ENCODE measurements at regions of chr12 and their contacts with region 1.

Region 1: GRCh38 chr12:6278439-6279255 is 31.8 kb upstream of the PLEKHG6 start:
- DNase-seq: peak; percentile 85
- ATAC-seq: peak; percentile 98
- H3K4me3 Mint-ChIP-seq: peak overlapping the region; percentile 61
- H3K27ac Mint-ChIP-seq: peak overlapping the region; percentile 21
- H3K4me1 Mint-ChIP-seq: peaks cover 3% of the 10 kb centered on the region
- H3K27me3 Mint-ChIP-seq: peaks cover 52% of the 10 kb centered on the region

Region 2: GRCh38 chr12:6062757-6063735 is 215.6 kb before region 1 on chr12:
- CTCF ChIA-PET with region 1: interaction called, 17 read pairs
- DNase-seq: peak; percentile 61
- ATAC-seq: peak; percentile 72
- H3K4me3 Mint-ChIP-seq: no peak overlapping the region
- H3K27ac Mint-ChIP-seq: no peak overlapping the region
- H3K4me1 Mint-ChIP-seq: no peaks in the 10 kb centered on the region
- H3K27me3 Mint-ChIP-seq: peaks cover 14% of the 10 kb centered on the region

Region 3: GRCh38 chr12:6230321-6231110 is 48.1 kb before region 1 on chr12:
- CTCF ChIA-PET with region 1: interaction called, 17 read pairs
- DNase-seq: peak; percentile 93
- ATAC-seq: peak; percentile 95
- H3K4me3 Mint-ChIP-seq: peak overlapping the region; percentile 19
- H3K27ac Mint-ChIP-seq: peak overlapping the region; percentile 81
- H3K4me1 Mint-ChIP-seq: peaks cover 29% of the 10 kb centered on the region
- H3K27me3 Mint-ChIP-seq: peaks cover 7% of the 10 kb centered on the region

Region 4: GRCh38 chr12:6306615-6307220 is 28.1 kb after region 1 on chr12:
- CTCF ChIA-PET with region 1: no interaction called
- DNase-seq: no peak
- ATAC-seq: no peak
- H3K4me3 Mint-ChIP-seq: no peak overlapping the region
- H3K27ac Mint-ChIP-seq: no peak overlapping the region
- H3K4me1 Mint-ChIP-seq: no peaks in the 10 kb centered on the region
- H3K27me3 Mint-ChIP-seq: peaks cover 33% of the 10 kb centered on the region

Region 5: DNA sequence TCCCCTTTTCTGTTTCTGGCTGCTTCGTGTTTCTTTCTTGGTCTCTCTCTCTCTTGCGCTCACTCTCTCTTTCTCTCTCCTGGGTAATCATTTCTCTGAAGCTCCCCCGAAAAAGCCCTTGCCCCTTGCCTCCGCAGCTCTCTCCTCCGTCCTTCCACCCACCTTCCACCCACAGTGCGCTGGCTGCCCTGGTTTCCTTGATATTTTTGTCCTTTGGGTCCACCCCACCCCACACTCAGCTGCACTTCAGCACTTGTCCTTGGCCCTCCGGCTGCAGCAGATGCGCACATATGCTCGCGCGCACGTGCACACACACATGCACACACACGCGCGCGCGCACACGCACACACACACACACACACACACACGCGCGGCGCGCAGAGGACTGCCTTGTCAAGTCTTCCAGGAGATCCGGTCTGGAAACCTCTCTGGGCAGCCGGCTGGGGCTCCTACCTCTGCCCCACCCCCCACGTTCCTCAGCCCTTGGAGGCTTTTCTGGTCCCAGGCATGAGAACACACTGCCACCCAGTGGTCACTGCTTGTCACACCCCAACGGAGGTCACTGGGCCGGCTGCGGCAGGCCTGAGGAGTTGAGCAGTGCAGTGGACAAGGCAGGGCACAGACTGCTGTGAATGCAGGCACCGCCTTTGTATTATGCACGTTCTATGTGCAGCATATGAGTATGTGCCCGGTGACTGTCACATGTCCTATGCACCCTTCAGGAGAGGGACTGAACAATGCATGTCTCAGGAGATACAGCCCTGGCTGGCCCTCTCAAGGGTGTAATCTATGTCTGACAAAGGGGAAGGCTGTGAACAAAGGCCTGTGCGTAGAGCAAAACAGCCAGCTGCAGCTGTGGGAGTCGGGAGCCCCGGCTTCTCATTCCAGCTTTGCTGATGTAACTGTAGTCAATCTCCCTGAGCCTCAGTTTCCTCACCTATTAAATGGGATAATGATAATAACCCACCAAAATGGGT is 500.2 kb after region 1 on chr12:
- CTCF ChIA-PET with region 1: no interaction called
- DNase-seq: peak; percentile 94
- ATAC-seq: peak; percentile 70
- H3K4me3 Mint-ChIP-seq: peak overlapping the region; percentile 52
- H3K27ac Mint-ChIP-seq: peak overlapping the region; percentile 80
- H3K4me1 Mint-ChIP-seq: peaks cover 60% of the 10 kb centered on the region
- H3K27me3 Mint-ChIP-seq: no peaks in the 10 kb centered on the region